WTC11 (cell line): ENCODE measurements at regions of chr22 and their contacts with region 1.

Region 1: GRCh38 chr22:21982338-21982965 is at the start of gene TOP3B:
- DNase-seq: peak; percentile 79
- ATAC-seq: peak; percentile 72
- H3K4me3 Mint-ChIP-seq: peak within 1 kb of the TSS; percentile 87
- H3K27ac Mint-ChIP-seq: peak within 1 kb of the TSS; percentile 76
- H3K4me1 Mint-ChIP-seq: peaks cover 8% of the 10 kb centered on the region
- H3K27me3 Mint-ChIP-seq: peaks cover 28% of the 10 kb centered on the region
- CTCF ChIP-seq: no peak
- total RNA-seq, gene TOP3B: 52.5 to 68.6 TPM (median 52.7 TPM) in 3 replicates

Region 2: DNA sequence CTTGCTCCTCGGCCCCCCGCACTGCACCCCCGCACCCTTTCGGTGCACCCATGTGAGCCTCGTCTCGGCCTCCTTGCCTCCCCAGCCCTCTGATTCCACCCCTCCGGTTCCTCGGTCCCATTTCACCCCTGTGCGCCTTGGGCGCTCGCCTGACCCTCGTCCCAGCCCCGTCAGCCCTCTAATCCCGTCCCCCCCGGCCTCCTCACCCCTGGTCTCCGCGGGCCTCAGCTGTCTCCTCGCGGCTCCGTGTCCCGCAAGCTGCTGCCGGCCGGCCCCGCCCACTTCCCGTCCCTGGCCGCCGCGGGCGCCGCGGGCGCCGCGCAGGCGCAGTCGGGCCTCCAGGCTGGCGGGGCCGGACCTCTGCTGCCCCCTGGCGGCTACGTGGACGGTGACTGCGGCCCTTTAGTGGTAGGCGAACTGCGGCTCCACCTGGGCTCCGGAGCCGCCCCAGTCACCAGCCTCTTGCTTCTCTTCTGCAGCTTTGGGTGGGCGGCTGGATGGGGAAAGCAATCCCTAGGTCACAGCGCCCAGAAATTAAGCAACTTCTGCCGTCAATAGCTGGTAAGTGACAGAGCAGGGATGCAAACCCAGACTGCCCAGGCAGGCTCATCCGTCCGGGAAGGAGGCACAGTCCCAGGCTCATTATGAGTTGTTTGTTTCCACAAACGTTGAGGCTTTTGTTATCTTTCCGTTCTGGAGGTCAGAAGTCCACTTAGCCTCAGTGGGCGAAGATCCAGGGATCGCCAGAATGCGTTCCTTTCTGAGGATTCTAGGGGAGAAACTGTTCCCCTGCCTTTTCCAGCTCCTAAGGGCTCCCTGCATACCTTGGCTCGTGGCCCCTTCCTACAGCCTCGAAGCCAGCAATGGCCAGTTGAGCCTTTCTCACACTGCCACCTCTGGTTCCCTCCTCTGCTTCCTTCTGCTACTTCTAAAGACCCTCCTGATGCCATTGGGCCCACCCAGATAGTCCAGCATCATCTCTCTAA is 29.6 kb before region 1 on chr22 and contains the start of gene PPM1F:
- CTCF ChIA-PET with region 1: interaction called, 10 read pairs
- POLR2A ChIA-PET with region 1: no interaction called
- DNase-seq: peak; percentile 86
- ATAC-seq: peak; percentile 77
- H3K4me3 Mint-ChIP-seq: peak within 1 kb of the TSS; percentile 76
- H3K27ac Mint-ChIP-seq: no peak within 1 kb of the TSS
- H3K4me1 Mint-ChIP-seq: peaks cover 8% of the 10 kb centered on the region
- H3K27me3 Mint-ChIP-seq: peaks cover 26% of the 10 kb centered on the region
- CTCF ChIP-seq: peak; percentile 92
- total RNA-seq, gene PPM1F: 23.9 to 30.6 TPM (median 28.6 TPM) in 3 replicates

Region 3: DNA sequence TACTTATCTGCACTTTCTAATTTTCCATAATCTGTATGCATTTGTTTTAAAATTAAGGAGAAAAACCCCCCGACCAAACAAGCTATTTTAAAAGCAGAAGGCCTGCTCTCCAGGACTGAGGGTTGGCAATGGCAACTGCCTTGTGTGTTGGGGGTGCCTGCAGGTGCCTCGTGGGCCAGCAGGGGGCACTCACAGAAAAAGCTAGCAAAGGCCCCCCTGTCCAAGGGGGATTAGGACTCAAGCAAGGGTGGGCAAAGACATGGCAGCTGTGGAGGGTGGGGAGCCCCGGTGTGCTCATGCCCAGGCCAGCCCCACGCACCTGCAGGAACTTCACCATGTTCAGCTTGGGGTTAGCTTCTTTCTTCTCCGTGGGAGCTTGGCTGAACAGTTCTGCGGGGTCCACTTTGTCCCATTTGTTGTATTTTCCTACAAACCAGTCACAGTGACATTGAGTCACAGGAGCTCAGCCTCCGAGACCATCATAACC is 10.1 kb before region 1 on chr22:
- CTCF ChIA-PET with region 1: interaction called, 31 read pairs
- POLR2A ChIA-PET with region 1: no interaction called
- DNase-seq: peak; percentile 78
- ATAC-seq: peak; percentile 92
- H3K4me3 Mint-ChIP-seq: no peak overlapping the region
- H3K27ac Mint-ChIP-seq: no peak overlapping the region
- H3K4me1 Mint-ChIP-seq: no peaks in the 10 kb centered on the region
- H3K27me3 Mint-ChIP-seq: peaks cover 3% of the 10 kb centered on the region; the same call in 1 of the 2 replicates
- CTCF ChIP-seq: peak; percentile 78

Region 4: DNA sequence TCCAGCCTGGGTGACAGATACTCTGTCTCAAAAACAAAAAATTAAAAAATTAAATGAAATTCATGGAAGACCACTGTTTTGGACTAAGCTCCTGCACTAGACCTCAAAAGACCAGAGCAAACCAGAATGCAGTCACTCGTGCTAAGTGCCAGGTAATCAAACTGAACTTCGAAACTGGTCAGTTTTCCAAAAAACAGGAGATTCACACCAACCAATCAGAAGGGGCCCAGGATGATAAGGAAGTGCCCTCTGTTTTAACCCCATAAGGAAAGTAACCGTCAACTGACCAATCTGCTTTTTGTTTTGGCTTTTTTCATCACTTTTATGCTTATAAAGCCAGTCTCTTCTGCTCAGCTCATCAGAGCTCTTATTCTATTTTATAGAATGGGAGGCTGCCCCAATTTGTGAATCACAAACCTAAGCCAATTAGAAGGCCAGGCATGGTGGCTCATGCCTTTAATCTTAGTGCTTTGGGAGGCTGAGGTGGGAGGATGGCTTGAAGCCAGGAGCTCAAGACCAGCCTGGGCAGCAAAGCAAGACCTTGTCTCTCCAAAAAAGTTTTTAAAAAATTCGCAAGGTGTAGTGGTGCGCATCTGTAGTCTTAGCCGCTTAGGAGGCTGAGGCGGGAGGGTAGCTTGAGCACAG is 10.3 kb after region 1 on chr22:
- CTCF ChIA-PET with region 1: interaction called, 11 read pairs
- POLR2A ChIA-PET with region 1: no interaction called
- DNase-seq: no peak
- ATAC-seq: no peak
- H3K4me3 Mint-ChIP-seq: no peak overlapping the region
- H3K27ac Mint-ChIP-seq: no peak overlapping the region
- H3K4me1 Mint-ChIP-seq: no peaks in the 10 kb centered on the region
- H3K27me3 Mint-ChIP-seq: peaks cover 100% of the 10 kb centered on the region
- CTCF ChIP-seq: no peak

Region 5: DNA sequence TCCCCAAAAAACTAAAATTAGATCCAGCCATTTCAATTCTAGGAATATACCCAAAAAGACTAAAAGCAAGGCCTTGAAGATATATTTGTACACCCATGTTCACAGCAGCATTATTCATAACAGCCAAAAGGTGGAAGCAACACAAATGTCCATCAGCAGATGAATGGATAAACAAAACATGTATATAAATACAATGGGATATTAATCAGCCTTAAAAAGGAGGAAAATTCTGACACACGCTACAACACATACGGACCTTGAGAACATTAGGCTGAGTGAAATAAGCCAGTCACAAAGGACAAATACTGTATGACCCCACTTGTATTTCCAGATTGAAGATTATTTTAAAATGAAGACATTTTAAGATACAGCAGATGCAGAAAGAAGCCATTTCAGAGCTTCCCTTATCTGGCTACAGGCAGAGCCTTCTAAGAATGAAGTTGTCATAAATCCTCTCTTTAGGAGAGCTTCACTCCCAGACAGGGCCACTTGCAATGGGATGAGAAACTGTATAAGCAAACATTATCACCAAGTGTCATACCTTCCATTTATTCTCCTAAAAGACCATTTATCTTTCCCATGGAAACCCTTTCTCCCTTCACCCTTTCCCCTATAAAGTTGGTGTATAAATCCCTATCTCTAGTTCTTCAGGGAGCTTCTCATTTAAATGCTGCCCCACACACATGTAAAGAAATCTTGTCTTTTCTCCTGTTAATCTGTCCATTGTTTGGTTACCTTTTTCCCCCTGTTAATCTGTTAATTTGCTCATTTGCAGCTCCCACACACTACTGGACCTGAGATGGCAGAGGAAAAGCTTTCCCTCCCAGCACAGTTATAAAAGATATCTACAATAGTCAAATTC is 19.4 kb after region 1 on chr22:
- CTCF ChIA-PET with region 1: interaction called, 13 read pairs
- POLR2A ChIA-PET with region 1: no interaction called
- DNase-seq: no peak
- ATAC-seq: no peak
- H3K4me3 Mint-ChIP-seq: no peak overlapping the region
- H3K27ac Mint-ChIP-seq: no peak overlapping the region
- H3K4me1 Mint-ChIP-seq: no peaks in the 10 kb centered on the region
- H3K27me3 Mint-ChIP-seq: peaks cover 100% of the 10 kb centered on the region
- CTCF ChIP-seq: no peak

Region 6: GRCh38 chr22:22043296-22044078 is 61.0 kb after region 1 on chr22:
- CTCF ChIA-PET with region 1: interaction called, 12 read pairs
- POLR2A ChIA-PET with region 1: no interaction called
- DNase-seq: no peak
- ATAC-seq: peak; percentile 16; the same call in 1 of the 2 replicates
- H3K4me3 Mint-ChIP-seq: no peak overlapping the region
- H3K27ac Mint-ChIP-seq: no peak overlapping the region
- H3K4me1 Mint-ChIP-seq: no peaks in the 10 kb centered on the region
- H3K27me3 Mint-ChIP-seq: peaks cover 94% of the 10 kb centered on the region
- CTCF ChIP-seq: no peak